ENCODE measurements at regions of chr18 and their contacts with region 1.

Region 1: GRCh38 chr18:21111341-21112139 is at the start of gene ROCK1:
- DNase-seq: peak; percentile 98 to 100 (median 99)
- ATAC-seq: peak; percentile 81
- H3K4me3 ChIP-seq: peak within 1 kb of the TSS; percentile 88
- H3K4me3 Mint-ChIP-seq: no peak within 1 kb of the TSS
- H3K27ac ChIP-seq: peak within 1 kb of the TSS; percentile 91 to 94
- H3K27ac Mint-ChIP-seq: peak within 1 kb of the TSS; percentile 87
- H3K4me1 ChIP-seq: peaks cover 13% of the 10 kb centered on the region
- H3K4me1 Mint-ChIP-seq: peaks cover 11% of the 10 kb centered on the region
- H3K27me3 ChIP-seq: no peaks in the 10 kb centered on the region
- H3K27me3 Mint-ChIP-seq: no peaks in the 10 kb centered on the region
- CTCF ChIP-seq: no peak
- total RNA-seq, gene ROCK1: 85.5 to 91.2 TPM

Region 2: DNA sequence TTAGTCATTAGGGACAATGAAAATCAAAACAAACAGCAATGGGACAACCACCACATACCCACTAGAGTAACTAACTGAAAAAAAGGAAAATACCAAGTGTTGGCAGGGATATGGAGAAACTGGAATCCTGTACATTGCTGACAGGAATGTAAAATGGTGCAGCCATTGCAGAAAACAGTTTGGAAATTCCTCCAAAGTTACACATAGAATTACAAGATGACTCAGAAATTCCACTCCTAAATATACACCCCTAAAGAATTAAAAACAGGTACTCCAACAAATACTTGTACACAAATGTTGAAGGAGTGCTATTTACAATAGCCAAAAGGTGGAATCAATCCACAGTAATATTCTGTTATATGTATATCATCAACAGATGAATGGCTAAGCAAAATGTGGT is 110.9 kb before region 1 on chr18:
- CTCF ChIA-PET with region 1: no interaction called
- POLR2A ChIA-PET with region 1: no interaction called
- intact Hi-C with region 1: no loop called
- DNase-seq: no peak
- ATAC-seq: no peak
- H3K4me3 ChIP-seq: no peak overlapping the region
- H3K4me3 Mint-ChIP-seq: no peak overlapping the region
- H3K27ac ChIP-seq: no peak overlapping the region
- H3K27ac Mint-ChIP-seq: peak overlapping the region; percentile 22
- H3K4me1 ChIP-seq: no peaks in the 10 kb centered on the region
- H3K4me1 Mint-ChIP-seq: peaks cover 36% of the 10 kb centered on the region
- H3K27me3 ChIP-seq: no peaks in the 10 kb centered on the region
- H3K27me3 Mint-ChIP-seq: no peaks in the 10 kb centered on the region
- CTCF ChIP-seq: no peak

Region 3: DNA sequence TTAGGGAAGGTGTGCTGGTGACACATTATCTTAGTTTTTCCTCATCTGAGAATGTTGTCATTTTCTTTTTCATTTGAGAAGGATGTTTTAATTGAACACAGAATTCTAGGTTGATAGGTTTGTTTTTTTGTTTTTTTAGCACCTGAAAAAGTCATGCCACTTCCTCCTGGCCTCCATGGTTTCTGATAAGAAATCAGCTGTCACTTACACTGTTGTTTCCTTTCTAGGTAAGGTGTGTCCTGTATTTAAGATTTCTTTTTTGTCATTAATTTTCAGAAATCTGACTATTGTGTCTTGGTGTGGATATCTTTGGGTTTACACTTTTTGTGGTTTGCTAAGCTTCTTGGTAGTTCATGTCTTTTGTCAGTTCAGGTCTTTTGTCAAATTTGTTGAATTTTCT is 99.2 kb before region 1 on chr18:
- CTCF ChIA-PET with region 1: no interaction called
- POLR2A ChIA-PET with region 1: no interaction called
- intact Hi-C with region 1: loop called in 1 of 2 experiments (anchors 5 kb)
- DNase-seq: peak in 1 of 14 experiments; percentile 9
- ATAC-seq: no peak
- H3K4me3 ChIP-seq: no peak overlapping the region
- H3K4me3 Mint-ChIP-seq: no peak overlapping the region
- H3K27ac ChIP-seq: no peak overlapping the region
- H3K27ac Mint-ChIP-seq: no peak overlapping the region
- H3K4me1 ChIP-seq: no peaks in the 10 kb centered on the region
- H3K4me1 Mint-ChIP-seq: peaks cover 18% of the 10 kb centered on the region
- H3K27me3 ChIP-seq: no peaks in the 10 kb centered on the region
- H3K27me3 Mint-ChIP-seq: no peaks in the 10 kb centered on the region
- CTCF ChIP-seq: no peak

Region 4: GRCh38 chr18:21074336-21075323 is 36.9 kb before region 1 on chr18:
- CTCF ChIA-PET with region 1: no interaction called
- POLR2A ChIA-PET with region 1: interaction called, 6 read pairs
- intact Hi-C with region 1: loop called in 1 of 2 experiments (anchors 5 kb)
- DNase-seq: peak in 1 of 14 experiments; percentile 19
- ATAC-seq: peak; percentile 52
- H3K4me3 ChIP-seq: no peak overlapping the region
- H3K4me3 Mint-ChIP-seq: peak overlapping the region; percentile 66
- H3K27ac ChIP-seq: no peak overlapping the region
- H3K27ac Mint-ChIP-seq: peak overlapping the region; percentile 62
- H3K4me1 ChIP-seq: peaks cover 42% of the 10 kb centered on the region
- H3K4me1 Mint-ChIP-seq: peaks cover 78% of the 10 kb centered on the region
- H3K27me3 ChIP-seq: no peaks in the 10 kb centered on the region
- H3K27me3 Mint-ChIP-seq: no peaks in the 10 kb centered on the region
- CTCF ChIP-seq: no peak

Region 5: DNA sequence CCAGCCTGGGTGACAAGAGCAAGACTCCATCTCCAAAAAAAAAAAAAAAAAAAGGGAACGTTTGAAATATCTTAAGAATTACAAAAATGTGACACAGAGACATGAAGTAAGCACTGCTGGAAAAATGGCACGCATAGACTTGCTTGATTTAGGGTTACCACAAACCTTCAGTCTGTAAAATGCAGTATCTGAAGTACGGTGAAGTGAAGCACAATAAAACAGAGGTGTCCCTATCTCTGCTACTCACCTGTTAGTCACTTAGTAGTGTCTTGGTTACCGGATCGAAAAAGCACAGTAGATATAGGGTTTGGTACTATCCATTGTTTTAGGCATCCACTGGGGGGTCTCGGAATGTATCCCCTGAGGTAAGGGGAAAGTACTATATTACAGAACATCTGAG is 118.9 kb after region 1 on chr18:
- CTCF ChIA-PET with region 1: no interaction called
- POLR2A ChIA-PET with region 1: no interaction called
- intact Hi-C with region 1: no loop called
- DNase-seq: no peak
- ATAC-seq: no peak
- H3K4me3 ChIP-seq: no peak overlapping the region
- H3K4me3 Mint-ChIP-seq: no peak overlapping the region
- H3K27ac ChIP-seq: no peak overlapping the region
- H3K27ac Mint-ChIP-seq: no peak overlapping the region
- H3K4me1 ChIP-seq: no peaks in the 10 kb centered on the region
- H3K4me1 Mint-ChIP-seq: no peaks in the 10 kb centered on the region
- H3K27me3 ChIP-seq: no peaks in the 10 kb centered on the region
- H3K27me3 Mint-ChIP-seq: peaks cover 5% of the 10 kb centered on the region
- CTCF ChIP-seq: no peak

Region 6: GRCh38 chr18:21600526-21601410 is 489.2 kb after region 1 on chr18 and contains the start of gene ESCO1:
- CTCF ChIA-PET with region 1: no interaction called
- POLR2A ChIA-PET with region 1: interaction called, 17 read pairs
- intact Hi-C with region 1: loop called in 1 of 2 experiments (anchors 5 kb)
- DNase-seq: peak; percentile 86 to 99 (median 91)
- ATAC-seq: peak; percentile 86
- H3K4me3 ChIP-seq: peak within 1 kb of the TSS; percentile 96
- H3K4me3 Mint-ChIP-seq: peak within 1 kb of the TSS; percentile 100
- H3K27ac ChIP-seq: peak within 1 kb of the TSS; percentile 97 to 98
- H3K27ac Mint-ChIP-seq: peak within 1 kb of the TSS; percentile 99
- H3K4me1 ChIP-seq: peaks cover 28% of the 10 kb centered on the region
- H3K4me1 Mint-ChIP-seq: peaks cover 57% of the 10 kb centered on the region
- H3K27me3 ChIP-seq: no peaks in the 10 kb centered on the region
- H3K27me3 Mint-ChIP-seq: no peaks in the 10 kb centered on the region
- CTCF ChIP-seq: peak; percentile 98
- total RNA-seq, gene ESCO1: 31.7 to 32.8 TPM

Region 7: GRCh38 chr18:21740724-21741510 is 629.4 kb after region 1 on chr18 and contains the start of gene MIB1:
- CTCF ChIA-PET with region 1: no interaction called
- POLR2A ChIA-PET with region 1: interaction called, 3 read pairs
- intact Hi-C with region 1: loop called in 1 of 2 experiments (anchors 2 kb)
- DNase-seq: peak in 11 of 14 experiments; percentile 25 to 99 (median 76)
- ATAC-seq: peak; percentile 57
- H3K4me3 ChIP-seq: peak within 1 kb of the TSS; percentile 94
- H3K4me3 Mint-ChIP-seq: peak within 1 kb of the TSS; percentile 98
- H3K27ac ChIP-seq: peak within 1 kb of the TSS; percentile 87 to 95
- H3K27ac Mint-ChIP-seq: peak within 1 kb of the TSS; percentile 93
- H3K4me1 ChIP-seq: peaks cover 34% of the 10 kb centered on the region
- H3K4me1 Mint-ChIP-seq: peaks cover 44% of the 10 kb centered on the region
- H3K27me3 ChIP-seq: no peaks in the 10 kb centered on the region
- H3K27me3 Mint-ChIP-seq: no peaks in the 10 kb centered on the region
- CTCF ChIP-seq: no peak
- total RNA-seq, gene MIB1: 13.6 to 15.3 TPM